ENCODE measurements at regions of chr14 and their contacts with region 1.

Region 1: GRCh38 chr14:85596562-85596961 is 66.6 kb downstream of the FLRT2 start:
- DNase-seq: no peak
- ATAC-seq: no peak
- H3K4me3 ChIP-seq: no peak overlapping the region
- H3K4me3 Mint-ChIP-seq: no peak overlapping the region
- H3K27ac ChIP-seq: no peak overlapping the region
- H3K27ac Mint-ChIP-seq: no peak overlapping the region
- H3K4me1 ChIP-seq: no peaks in the 10 kb centered on the region
- H3K4me1 Mint-ChIP-seq: no peaks in the 10 kb centered on the region
- H3K27me3 ChIP-seq: no peaks in the 10 kb centered on the region
- H3K27me3 Mint-ChIP-seq: no peaks in the 10 kb centered on the region
- CTCF ChIP-seq: no peak

Region 2: GRCh38 chr14:85542623-85543022 is 53.9 kb before region 1 on chr14:
- CTCF ChIA-PET with region 1: no interaction called
- POLR2A ChIA-PET with region 1: no interaction called
- intact Hi-C with region 1: no loop called
- DNase-seq: no peak
- ATAC-seq: no peak
- H3K4me3 ChIP-seq: no peak overlapping the region
- H3K4me3 Mint-ChIP-seq: no peak overlapping the region
- H3K27ac ChIP-seq: no peak overlapping the region
- H3K27ac Mint-ChIP-seq: no peak overlapping the region
- H3K4me1 ChIP-seq: no peaks in the 10 kb centered on the region
- H3K4me1 Mint-ChIP-seq: no peaks in the 10 kb centered on the region
- H3K27me3 ChIP-seq: no peaks in the 10 kb centered on the region
- H3K27me3 Mint-ChIP-seq: no peaks in the 10 kb centered on the region
- CTCF ChIP-seq: no peak

Region 3: DNA sequence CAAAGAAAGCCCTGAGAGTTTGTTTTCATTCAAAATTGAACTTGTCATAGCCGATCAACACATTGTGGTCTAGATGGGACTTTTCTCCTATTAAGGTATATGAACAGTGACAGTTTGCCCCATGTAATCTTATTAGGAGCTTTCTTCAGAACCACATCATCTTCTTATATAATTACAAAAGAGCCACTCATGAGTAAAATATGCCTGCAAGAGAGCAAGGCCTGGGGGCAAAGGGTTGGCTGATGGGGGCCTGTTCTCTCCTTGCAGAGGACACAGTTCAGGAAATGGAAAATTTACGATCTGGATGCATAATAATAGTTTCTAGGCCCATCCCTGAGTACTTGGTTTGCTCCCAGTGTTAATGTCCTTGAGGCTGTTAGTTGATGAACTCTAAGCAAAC is 21.2 kb after region 1 on chr14:
- CTCF ChIA-PET with region 1: no interaction called
- POLR2A ChIA-PET with region 1: no interaction called
- intact Hi-C with region 1: loop called in 1 of 2 experiments (anchors 2 kb)
- DNase-seq: no peak
- ATAC-seq: no peak
- H3K4me3 ChIP-seq: no peak overlapping the region
- H3K4me3 Mint-ChIP-seq: no peak overlapping the region
- H3K27ac ChIP-seq: no peak overlapping the region
- H3K27ac Mint-ChIP-seq: no peak overlapping the region
- H3K4me1 ChIP-seq: no peaks in the 10 kb centered on the region
- H3K4me1 Mint-ChIP-seq: no peaks in the 10 kb centered on the region
- H3K27me3 ChIP-seq: no peaks in the 10 kb centered on the region
- H3K27me3 Mint-ChIP-seq: no peaks in the 10 kb centered on the region
- CTCF ChIP-seq: no peak

Region 4: GRCh38 chr14:85663248-85663647 is 66.7 kb after region 1 on chr14:
- CTCF ChIA-PET with region 1: no interaction called
- POLR2A ChIA-PET with region 1: no interaction called
- intact Hi-C with region 1: no loop called
- DNase-seq: no peak
- ATAC-seq: no peak
- H3K4me3 ChIP-seq: no peak overlapping the region
- H3K4me3 Mint-ChIP-seq: no peak overlapping the region
- H3K27ac ChIP-seq: no peak overlapping the region
- H3K27ac Mint-ChIP-seq: no peak overlapping the region
- H3K4me1 ChIP-seq: no peaks in the 10 kb centered on the region
- H3K4me1 Mint-ChIP-seq: no peaks in the 10 kb centered on the region
- H3K27me3 ChIP-seq: no peaks in the 10 kb centered on the region
- H3K27me3 Mint-ChIP-seq: no peaks in the 10 kb centered on the region
- CTCF ChIP-seq: no peak